PC-3 (cell line): ENCODE measurements at regions of chr2 and their contacts with region 1.

Region 1: DNA sequence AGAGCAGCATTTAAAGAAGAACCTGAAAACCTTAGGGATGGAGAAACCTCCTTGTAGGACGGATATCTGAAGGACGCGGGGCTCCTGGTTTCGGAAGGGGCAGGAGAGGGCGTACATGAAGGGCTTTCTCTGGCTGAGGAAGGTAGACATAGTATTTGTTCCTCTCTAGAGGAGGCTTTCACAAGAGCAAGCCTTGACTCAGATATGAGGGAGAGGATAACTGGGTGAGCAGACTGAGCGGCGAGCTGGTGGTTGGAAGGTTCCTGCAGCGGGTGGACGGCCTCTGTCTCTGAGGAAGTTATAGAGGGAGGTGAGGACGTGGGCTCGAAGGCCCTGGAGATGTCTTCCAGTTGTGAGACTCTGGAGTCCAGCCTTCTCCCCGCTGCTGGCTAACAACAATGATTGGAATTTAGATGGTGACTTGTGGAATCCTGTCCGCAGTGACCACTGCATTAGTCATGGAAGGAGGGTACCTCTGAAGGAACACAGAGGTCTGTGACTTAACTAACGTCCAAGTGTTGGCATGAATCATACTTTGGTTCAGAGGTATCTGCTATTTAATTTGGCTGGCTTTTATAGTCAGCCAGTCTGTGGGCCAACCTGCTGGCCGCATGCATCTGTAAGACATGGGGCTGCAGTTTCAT is 80.9 kb downstream of the ASAP2 start:
- DNase-seq: peak; percentile 99
- ATAC-seq: peak; percentile 83
- H3K4me3 ChIP-seq: peak overlapping the region; percentile 34
- H3K27ac ChIP-seq: peak overlapping the region; percentile 98
- H3K4me1 ChIP-seq: peaks cover 64% of the 10 kb centered on the region
- H3K27me3 ChIP-seq: no peaks in the 10 kb centered on the region
- CTCF ChIP-seq: 0 out of 2 replicates have a peak, but pooled peaks have one; percentile 34

Region 2: DNA sequence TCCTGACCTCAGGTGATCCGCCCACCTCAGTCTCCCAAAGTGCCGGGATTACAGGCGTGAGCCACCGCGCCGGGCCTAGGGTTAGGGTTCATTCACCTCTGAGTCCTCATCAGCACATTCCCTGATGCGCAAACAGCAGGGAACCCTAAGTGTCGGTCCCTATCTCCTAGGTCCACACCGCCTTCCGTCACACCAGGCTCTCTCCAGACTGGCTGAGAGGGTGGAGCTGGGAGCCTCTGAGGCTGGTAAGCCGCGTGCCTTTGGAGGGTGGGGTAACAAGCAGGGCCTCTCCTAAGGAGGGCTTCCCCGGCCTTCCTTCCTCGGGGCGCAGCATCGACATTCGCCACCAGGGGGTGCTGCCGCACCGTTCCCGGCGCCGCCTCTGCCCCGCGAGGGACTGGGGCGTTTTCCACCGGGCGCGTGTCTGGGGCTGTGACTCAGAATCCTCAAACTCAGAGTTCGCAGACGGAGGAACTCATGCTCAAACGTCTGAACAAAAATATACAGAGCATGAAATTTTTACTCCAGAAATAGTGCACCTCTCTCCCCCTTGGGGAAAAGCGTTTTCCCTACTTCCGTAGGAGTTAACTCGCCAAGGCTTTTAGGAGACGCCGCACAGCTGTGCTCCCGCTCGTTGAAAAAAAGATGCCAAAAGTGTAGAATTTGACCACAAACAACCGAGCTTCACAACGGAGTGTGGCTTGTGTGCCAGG is 144.8 kb before region 1 on chr2:
- CTCF ChIA-PET with region 1: interaction called, 4 read pairs
- POLR2A ChIA-PET with region 1: no interaction called
- intact Hi-C with region 1: loop called (anchors 1 kb)
- DNase-seq: peak; percentile 94
- ATAC-seq: peak; percentile 86
- H3K4me3 ChIP-seq: peak overlapping the region; percentile 54
- H3K27ac ChIP-seq: peak overlapping the region; percentile 67
- H3K4me1 ChIP-seq: peaks cover 28% of the 10 kb centered on the region
- H3K27me3 ChIP-seq: no peaks in the 10 kb centered on the region
- CTCF ChIP-seq: peak; percentile 98

Region 3: DNA sequence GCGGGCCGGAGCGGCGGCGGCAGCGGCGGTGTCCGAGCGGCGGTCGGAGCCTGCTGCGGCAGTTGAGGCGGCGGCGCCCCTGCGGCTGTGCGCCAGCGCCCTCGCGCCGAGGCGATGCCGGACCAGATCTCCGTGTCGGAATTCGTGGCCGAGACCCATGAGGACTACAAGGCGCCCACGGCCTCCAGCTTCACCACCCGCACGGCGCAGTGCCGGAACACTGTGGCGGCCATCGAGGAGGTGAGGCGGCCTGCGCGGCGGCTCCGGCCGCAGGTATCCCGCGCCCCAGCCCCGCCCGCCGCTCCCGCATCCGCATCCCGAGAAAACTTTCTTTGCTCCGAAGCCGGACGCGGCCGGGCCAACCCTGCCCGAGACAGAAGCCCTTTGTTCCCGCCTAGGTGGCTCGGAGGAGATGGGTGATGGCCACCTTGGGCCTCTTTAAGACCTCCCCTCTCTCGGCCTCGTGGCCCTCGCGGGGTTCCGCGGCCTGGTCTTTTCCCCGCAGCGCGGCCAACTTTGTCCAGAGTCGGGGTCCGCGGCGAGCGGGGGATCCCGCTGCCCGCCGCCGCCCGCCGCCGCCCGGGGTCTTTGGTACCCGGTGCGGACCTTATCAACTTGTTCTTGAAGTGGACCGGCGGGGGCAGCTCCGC is 80.4 kb before region 1 on chr2:
- CTCF ChIA-PET with region 1: no interaction called
- POLR2A ChIA-PET with region 1: interaction called, 8 read pairs
- intact Hi-C with region 1: loop called (anchors 1 kb)
- DNase-seq: no peak
- ATAC-seq: peak; percentile 9
- H3K4me3 ChIP-seq: peak overlapping the region; percentile 89
- H3K27ac ChIP-seq: peak overlapping the region; percentile 80
- H3K4me1 ChIP-seq: peaks cover 34% of the 10 kb centered on the region
- H3K27me3 ChIP-seq: no peaks in the 10 kb centered on the region
- CTCF ChIP-seq: no peak

Region 4: GRCh38 chr2:9273486-9274130 is 13.9 kb before region 1 on chr2:
- CTCF ChIA-PET with region 1: no interaction called
- POLR2A ChIA-PET with region 1: interaction called, 10 read pairs
- intact Hi-C with region 1: no loop called
- DNase-seq: peak; percentile 76
- ATAC-seq: peak; percentile 78
- H3K4me3 ChIP-seq: no peak overlapping the region
- H3K27ac ChIP-seq: peak overlapping the region; percentile 60
- H3K4me1 ChIP-seq: peaks cover 26% of the 10 kb centered on the region
- H3K27me3 ChIP-seq: no peaks in the 10 kb centered on the region
- CTCF ChIP-seq: no peak

Region 5: GRCh38 chr2:9333591-9334171 is 46.2 kb after region 1 on chr2:
- CTCF ChIA-PET with region 1: interaction called, 3 read pairs
- POLR2A ChIA-PET with region 1: no interaction called
- intact Hi-C with region 1: loop called (anchors 1 kb)
- DNase-seq: peak; percentile 90
- ATAC-seq: peak; percentile 84
- H3K4me3 ChIP-seq: no peak overlapping the region
- H3K27ac ChIP-seq: peak overlapping the region; percentile 12; the same call in 1 of the 2 replicates
- H3K4me1 ChIP-seq: peaks cover 38% of the 10 kb centered on the region
- H3K27me3 ChIP-seq: no peaks in the 10 kb centered on the region
- CTCF ChIP-seq: peak; percentile 87